ENCODE measurements at regions of chr1 and their contacts with region 1.

Region 1: GRCh38 chr1:21289700-21290545 is at the start of gene ECE1:
- DNase-seq: peak; percentile 85
- ATAC-seq: peak; percentile 56
- total RNA-seq, gene ECE1: 49.3 TPM

Region 2: DNA sequence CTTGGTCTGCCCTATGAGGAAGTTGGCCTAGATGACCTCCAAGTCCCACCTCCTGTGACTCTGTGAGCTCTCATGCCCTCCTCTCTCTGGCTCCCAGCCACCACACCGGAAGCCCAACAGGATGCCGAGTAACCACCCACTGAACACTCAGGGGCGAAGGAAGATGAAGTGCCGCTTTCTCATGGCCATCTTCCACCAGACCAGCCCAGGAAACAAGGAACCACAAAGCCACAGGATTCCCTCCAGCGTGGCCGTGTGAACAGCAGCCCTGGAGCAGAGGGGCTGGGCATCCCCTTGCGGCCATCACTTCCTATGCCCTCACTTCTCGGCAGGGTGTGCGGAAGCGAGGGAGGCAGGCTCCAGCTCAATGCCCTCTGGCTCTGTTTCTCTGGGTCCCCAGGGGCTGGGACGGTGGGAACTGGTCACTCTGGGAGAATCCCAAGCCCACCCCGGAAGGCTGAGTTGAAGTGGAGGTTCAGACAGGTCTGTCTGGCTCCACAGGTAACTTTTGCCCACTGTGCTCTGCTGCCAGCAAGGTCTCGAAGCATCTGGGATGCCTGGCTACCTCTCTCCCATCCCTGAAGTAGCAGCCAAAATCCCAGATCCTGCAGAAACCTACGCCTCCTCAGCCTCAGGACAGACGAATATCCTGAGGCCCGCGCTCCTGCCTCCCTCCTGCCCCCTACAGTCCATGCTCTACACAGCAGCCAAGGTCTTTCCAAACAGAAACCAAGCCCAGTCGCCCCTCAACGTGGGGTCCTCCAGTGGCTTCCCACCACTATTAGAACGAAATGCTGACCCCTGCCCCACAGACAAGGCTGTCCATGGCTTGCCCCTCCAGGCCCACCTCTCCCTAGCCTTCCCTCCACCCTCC is 44.5 kb after region 1 on chr1:
- intact Hi-C with region 1: loop called (anchors 5 kb)
- DNase-seq: peak; percentile 91
- ATAC-seq: peak; percentile 24

Measured in Right ventricle myocardium inferior (tissue), 1 donor.